CD4-positive, alpha-beta memory T cell (primary cell): ENCODE measurements at regions of chr6 and their contacts with region 1.

Region 1: DNA sequence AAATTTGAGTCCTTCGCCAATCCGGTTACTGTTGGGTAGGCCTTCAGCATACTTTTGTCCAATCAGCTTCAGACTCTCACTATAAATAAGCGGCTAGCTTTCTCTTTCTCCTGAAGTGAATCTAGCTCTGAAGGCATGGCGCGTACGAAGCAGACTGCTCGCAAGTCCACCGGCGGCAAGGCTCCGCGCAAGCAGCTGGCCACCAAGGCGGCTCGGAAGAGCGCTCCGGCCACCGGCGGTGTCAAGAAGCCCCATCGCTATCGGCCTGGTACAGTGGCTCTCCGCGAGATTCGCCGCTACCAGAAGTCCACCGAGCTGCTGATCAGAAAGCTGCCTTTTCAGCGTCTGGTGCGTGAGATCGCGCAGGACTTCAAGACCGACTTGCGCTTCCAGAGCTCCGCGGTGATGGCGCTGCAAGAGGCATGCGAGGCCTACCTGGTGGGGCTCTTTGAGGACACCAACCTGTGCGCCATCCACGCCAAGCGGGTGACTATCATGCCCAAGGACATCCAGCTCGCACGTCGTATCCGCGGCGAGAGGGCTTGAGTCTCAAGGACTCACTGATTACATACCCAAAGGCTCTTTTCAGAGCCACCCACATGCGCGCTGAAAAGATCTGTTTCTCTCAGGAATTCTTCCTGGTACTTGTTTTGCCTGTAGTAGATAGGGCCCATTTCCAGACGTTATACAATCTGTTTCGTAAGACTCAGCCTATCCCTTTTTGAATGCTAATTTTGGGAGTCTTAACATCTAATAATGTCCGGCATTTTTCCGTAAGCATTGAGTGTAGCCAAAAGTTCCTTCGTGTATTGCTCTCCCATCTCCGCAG is 102.0 kb downstream of the OR2B2 start:
- DNase-seq: peak; percentile 85 to 94 (median 92)
- H3K4me3 ChIP-seq: peak overlapping the region; percentile 31 to 67
- H3K4me3 Mint-ChIP-seq: peak overlapping the region; percentile 92 to 99 (median 96)
- H3K27ac ChIP-seq: peak overlapping the region; percentile 79
- H3K27ac Mint-ChIP-seq: peak overlapping the region; percentile 94 to 98 (median 97)
- H3K4me1 ChIP-seq: peaks cover 49% of the 10 kb centered on the region
- H3K4me1 Mint-ChIP-seq: peaks cover 39 to 74% (median 50%) of the 10 kb centered on the region in 4 donors
- H3K27me3 ChIP-seq: no peaks in the 10 kb centered on the region
- H3K27me3 Mint-ChIP-seq: no peaks in the 10 kb centered on the region

Region 2: DNA sequence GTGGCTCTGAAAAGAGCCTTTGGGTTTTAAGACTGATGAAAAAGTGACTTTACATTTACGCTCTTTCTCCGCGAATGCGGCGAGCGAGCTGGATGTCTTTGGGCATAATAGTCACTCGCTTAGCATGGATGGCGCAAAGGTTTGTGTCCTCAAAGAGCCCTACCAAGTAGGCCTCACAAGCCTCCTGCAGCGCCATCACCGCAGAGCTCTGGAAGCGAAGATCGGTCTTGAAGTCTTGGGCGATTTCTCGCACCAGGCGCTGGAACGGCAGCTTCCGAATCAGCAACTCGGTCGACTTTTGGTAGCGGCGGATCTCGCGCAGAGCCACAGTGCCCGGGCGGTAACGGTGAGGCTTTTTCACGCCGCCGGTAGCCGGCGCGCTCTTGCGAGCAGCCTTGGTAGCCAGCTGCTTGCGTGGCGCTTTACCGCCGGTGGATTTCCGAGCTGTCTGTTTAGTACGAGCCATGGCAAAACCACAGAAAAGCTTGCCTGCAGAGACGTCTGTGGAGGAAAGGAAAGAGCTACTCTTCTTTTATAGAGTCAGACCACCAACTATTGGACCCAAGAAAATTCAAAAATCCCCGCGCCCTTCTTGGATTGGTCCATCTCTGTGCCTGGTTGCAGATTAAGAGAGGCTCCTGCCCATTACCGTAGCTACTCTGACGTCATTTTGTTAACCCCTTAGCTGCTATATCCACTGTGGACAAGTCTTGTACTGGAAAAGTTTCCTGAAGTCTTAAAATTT is 1778.4 kb before region 1 on chr6:
- CTCF ChIA-PET with region 1: interaction called, 5 read pairs
- POLR2A ChIA-PET with region 1: interaction called, 49 read pairs
- intact Hi-C with region 1: loop called (anchors 2 kb)
- DNase-seq: peak; percentile 86 to 94 (median 89)
- H3K4me3 ChIP-seq: peak overlapping the region; percentile 53 to 67
- H3K4me3 Mint-ChIP-seq: peak overlapping the region; percentile 91 to 99 (median 94)
- H3K27ac ChIP-seq: peak overlapping the region; percentile 71
- H3K27ac Mint-ChIP-seq: peak overlapping the region; percentile 89 to 98 (median 96)
- H3K4me1 ChIP-seq: peaks cover 35% of the 10 kb centered on the region
- H3K4me1 Mint-ChIP-seq: peaks cover 33 to 54% (median 44%) of the 10 kb centered on the region in 4 donors
- H3K27me3 ChIP-seq: no peaks in the 10 kb centered on the region
- H3K27me3 Mint-ChIP-seq: peaks cover 0 to 3% of the 10 kb centered on the region in 2 donors

Region 3: GRCh38 chr6:26196846-26197648 is 1613.1 kb before region 1 on chr6:
- CTCF ChIA-PET with region 1: no interaction called
- POLR2A ChIA-PET with region 1: interaction called, 59 read pairs
- intact Hi-C with region 1: no loop called
- DNase-seq: peak; percentile 92 to 93 (median 92)
- H3K4me3 ChIP-seq: peak overlapping the region; percentile 83 to 97
- H3K4me3 Mint-ChIP-seq: peak overlapping the region; percentile 94 to 99 (median 97)
- H3K27ac ChIP-seq: peak overlapping the region; percentile 84
- H3K27ac Mint-ChIP-seq: peak overlapping the region; percentile 96 to 100 (median 98)
- H3K4me1 ChIP-seq: peaks cover 43% of the 10 kb centered on the region
- H3K4me1 Mint-ChIP-seq: peaks cover 23 to 57% (median 41%) of the 10 kb centered on the region in 4 donors
- H3K27me3 ChIP-seq: no peaks in the 10 kb centered on the region
- H3K27me3 Mint-ChIP-seq: no peaks in the 10 kb centered on the region

Region 4: DNA sequence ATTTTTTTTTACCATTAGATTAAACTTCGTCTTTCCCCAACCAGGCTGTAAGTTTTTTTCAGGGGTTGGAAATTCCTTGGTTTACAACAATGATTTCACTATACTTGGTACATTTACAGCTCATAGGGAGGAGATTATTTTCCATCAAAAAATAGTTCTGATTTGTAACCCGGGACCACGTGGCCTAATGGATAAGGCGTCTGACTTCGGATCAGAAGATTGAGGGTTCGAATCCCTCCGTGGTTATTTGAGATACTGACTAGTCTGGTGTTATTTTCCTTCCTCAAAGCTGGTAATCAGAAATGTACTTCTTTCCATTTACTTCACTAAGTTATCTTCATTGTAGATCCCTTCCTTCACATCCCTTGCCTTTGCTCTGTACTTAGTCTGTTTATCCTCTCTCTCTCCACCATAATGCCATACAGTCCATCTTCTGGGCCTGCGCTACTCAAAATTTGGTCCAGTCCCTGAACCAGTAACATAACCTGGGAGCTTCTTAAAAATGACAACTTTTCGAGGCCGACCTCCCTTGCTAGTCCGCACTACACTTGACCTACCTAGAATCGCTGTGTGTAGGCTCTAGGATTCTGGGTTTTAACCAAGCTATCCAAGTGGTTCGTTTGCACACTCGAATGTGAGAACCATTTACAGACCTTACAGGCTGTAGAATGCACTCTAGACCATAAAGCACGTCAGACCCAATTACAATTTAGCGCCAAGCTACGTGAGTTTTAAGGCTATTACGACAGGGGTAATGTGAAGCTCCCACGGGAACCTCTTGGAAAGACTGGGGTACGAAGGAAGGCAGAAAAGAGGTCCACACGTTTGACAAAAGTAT is 1487.3 kb before region 1 on chr6:
- CTCF ChIA-PET with region 1: no interaction called
- POLR2A ChIA-PET with region 1: no interaction called
- intact Hi-C with region 1: loop called (anchors 1 kb)
- DNase-seq: peak; percentile 75 to 80 (median 79)
- H3K4me3 ChIP-seq: peak overlapping the region in 1 of 2 donors; percentile 62
- H3K4me3 Mint-ChIP-seq: peak overlapping the region; percentile 86 to 92 (median 88)
- H3K27ac ChIP-seq: no peak overlapping the region
- H3K27ac Mint-ChIP-seq: peak overlapping the region; percentile 42 to 98 (median 82)
- H3K4me1 ChIP-seq: peaks cover 12% of the 10 kb centered on the region
- H3K4me1 Mint-ChIP-seq: peaks cover 19 to 30% (median 24%) of the 10 kb centered on the region in 4 donors
- H3K27me3 ChIP-seq: no peaks in the 10 kb centered on the region
- H3K27me3 Mint-ChIP-seq: peaks cover 8 to 22% of the 10 kb centered on the region in 2 donors

Region 5: GRCh38 chr6:27138837-27139755 is 671.1 kb before region 1 on chr6:
- CTCF ChIA-PET with region 1: interaction called, 3 read pairs
- POLR2A ChIA-PET with region 1: interaction called, 146 read pairs
- intact Hi-C with region 1: no loop called
- DNase-seq: peak; percentile 64 to 79 (median 69)
- H3K4me3 ChIP-seq: peak overlapping the region; percentile 58 to 73
- H3K4me3 Mint-ChIP-seq: peak overlapping the region; percentile 93 to 98 (median 96)
- H3K27ac ChIP-seq: peak overlapping the region; percentile 94
- H3K27ac Mint-ChIP-seq: peak overlapping the region; percentile 98 to 99 (median 99)
- H3K4me1 ChIP-seq: peaks cover 45% of the 10 kb centered on the region
- H3K4me1 Mint-ChIP-seq: peaks cover 30 to 66% (median 40%) of the 10 kb centered on the region in 4 donors
- H3K27me3 ChIP-seq: no peaks in the 10 kb centered on the region
- H3K27me3 Mint-ChIP-seq: no peaks in the 10 kb centered on the region

Region 6: DNA sequence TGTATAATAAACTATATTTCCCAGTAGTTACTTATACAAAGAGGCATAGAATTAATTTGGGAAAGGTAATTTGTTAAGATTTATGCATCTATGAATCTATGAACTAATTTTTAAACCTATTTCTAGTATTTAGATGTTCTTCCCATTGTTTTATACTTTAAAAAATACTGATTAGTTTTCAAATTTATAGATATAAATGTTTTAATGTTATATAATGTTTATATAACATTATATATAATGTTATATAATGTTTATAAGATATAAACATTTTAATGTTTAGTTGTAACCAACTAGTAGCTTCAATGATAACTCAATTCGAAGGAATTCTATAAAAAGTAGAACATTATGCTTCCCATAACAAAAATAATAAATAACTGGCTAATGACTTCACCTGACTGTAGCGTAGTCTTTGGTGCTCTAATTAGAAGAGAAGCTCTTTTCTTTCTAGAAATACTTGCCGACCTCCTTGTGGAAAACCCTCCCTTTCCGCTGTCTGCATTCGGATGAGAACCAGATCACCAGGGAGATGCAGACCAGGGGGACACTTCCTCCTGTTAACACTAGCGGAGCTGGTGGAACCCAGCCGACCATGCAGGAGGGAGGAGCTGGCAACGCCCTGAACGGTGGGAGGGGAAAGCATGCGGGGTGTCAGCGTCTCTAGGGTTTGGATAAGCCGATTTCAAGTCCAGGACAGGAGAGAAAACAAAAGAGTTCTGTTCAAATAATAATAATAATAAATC is 56.3 kb before region 1 on chr6:
- CTCF ChIA-PET with region 1: interaction called, 7 read pairs
- POLR2A ChIA-PET with region 1: interaction called, 18 read pairs
- intact Hi-C with region 1: loop called (anchors 2 kb)
- DNase-seq: peak; percentile 27 to 66 (median 44)
- H3K4me3 ChIP-seq: peak overlapping the region; percentile 50 to 63
- H3K4me3 Mint-ChIP-seq: peak overlapping the region; percentile 85 to 99 (median 93)
- H3K27ac ChIP-seq: no peak overlapping the region
- H3K27ac Mint-ChIP-seq: peak overlapping the region; percentile 16 to 100 (median 99)
- H3K4me1 ChIP-seq: peaks cover 20% of the 10 kb centered on the region
- H3K4me1 Mint-ChIP-seq: peaks cover 15 to 47% (median 26%) of the 10 kb centered on the region in 4 donors
- H3K27me3 ChIP-seq: no peaks in the 10 kb centered on the region
- H3K27me3 Mint-ChIP-seq: peaks cover 0 to 5% of the 10 kb centered on the region in 2 donors

Region 7: GRCh38 chr6:27825025-27825793 is 15.1 kb after region 1 on chr6:
- CTCF ChIA-PET with region 1: interaction called, 52 read pairs
- POLR2A ChIA-PET with region 1: interaction called, 223 read pairs
- intact Hi-C with region 1: loop called (anchors 1 kb)
- DNase-seq: no peak
- H3K4me3 ChIP-seq: peak overlapping the region; percentile 62 to 79
- H3K4me3 Mint-ChIP-seq: peak overlapping the region; percentile 88 to 98 (median 92)
- H3K27ac ChIP-seq: peak overlapping the region; percentile 66
- H3K27ac Mint-ChIP-seq: peak overlapping the region; percentile 91 to 100 (median 98)
- H3K4me1 ChIP-seq: peaks cover 29% of the 10 kb centered on the region
- H3K4me1 Mint-ChIP-seq: peaks cover 16 to 43% (median 31%) of the 10 kb centered on the region in 4 donors
- H3K27me3 ChIP-seq: no peaks in the 10 kb centered on the region
- H3K27me3 Mint-ChIP-seq: no peaks in the 10 kb centered on the region